ENCODE measurements at regions of chr4 and their contacts with region 1.

Region 1: DNA sequence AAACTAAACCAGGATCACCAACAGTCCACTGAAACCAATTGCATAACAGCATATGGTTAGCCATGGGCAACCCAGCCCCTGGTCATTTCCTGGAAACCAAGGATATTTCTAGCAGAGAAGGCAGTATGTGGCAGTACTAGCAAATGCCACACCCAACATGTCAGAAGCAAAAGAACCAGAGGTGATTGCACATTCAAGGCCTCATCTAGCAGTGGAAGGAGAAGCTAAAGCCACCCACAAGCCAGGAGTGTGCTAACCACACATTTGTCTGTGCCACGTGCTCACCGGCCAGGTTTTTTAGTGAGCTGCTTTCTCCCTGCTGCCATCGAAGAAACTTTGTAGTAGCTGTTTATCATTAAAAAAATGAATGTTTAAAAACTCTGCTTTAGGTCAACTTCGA is 42.0 kb downstream of the TEC start:
- DNase-seq: no peak
- H3K4me3 ChIP-seq: no peak overlapping the region
- H3K27ac ChIP-seq: no peak overlapping the region
- H3K4me1 ChIP-seq: no peaks in the 10 kb centered on the region
- H3K27me3 ChIP-seq: no peaks in the 10 kb centered on the region
- CTCF ChIP-seq: no peak
- POLR2A ChIP-seq: no peak

Region 2: DNA sequence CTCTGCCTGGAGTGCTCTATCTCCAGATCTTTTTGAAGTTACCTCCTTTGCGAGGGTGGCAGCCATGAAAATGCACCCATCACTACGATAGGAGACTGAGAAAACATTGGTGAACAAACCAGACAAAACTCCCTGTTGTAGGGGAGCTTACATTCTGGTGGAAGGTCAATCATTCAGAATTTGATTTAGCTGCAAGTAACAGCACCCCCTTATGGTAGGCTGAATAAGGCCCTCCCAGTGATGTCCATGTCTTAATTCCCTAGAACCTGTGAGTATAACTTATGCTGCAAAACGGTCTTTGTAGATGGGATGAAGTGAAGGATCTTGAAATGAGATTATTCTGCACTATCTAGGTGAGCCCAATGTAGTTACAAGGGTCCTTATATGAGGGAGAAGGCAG is 47.6 kb after region 1 on chr4:
- intact Hi-C with region 1: loop called (anchors 2 kb)
- DNase-seq: no peak
- H3K4me3 ChIP-seq: no peak overlapping the region
- H3K27ac ChIP-seq: no peak overlapping the region
- H3K4me1 ChIP-seq: no peaks in the 10 kb centered on the region
- H3K27me3 ChIP-seq: no peaks in the 10 kb centered on the region
- CTCF ChIP-seq: no peak
- POLR2A ChIP-seq: no peak

Measured in breast epithelium (tissue), 4 donors.